GM12878 (cell line): ENCODE measurements at regions of chr20 and their contacts with region 1.

Region 1: GRCh38 chr20:50744143-50744792 is 12.9 kb downstream of the PARD6B start:
- DNase-seq: no peak
- ATAC-seq: no peak
- H3K4me3 ChIP-seq: no peak overlapping the region
- H3K27ac ChIP-seq: no peak overlapping the region
- H3K4me1 ChIP-seq: peaks cover 6% of the 10 kb centered on the region; the same call in 1 of the 2 replicates
- H3K27me3 ChIP-seq: no peaks in the 10 kb centered on the region
- CTCF ChIP-seq: no peak
- EP300 ChIP-seq: no peak
- POLR2A ChIP-seq: no peak
- RAD21 ChIP-seq: no peak

Region 2: GRCh38 chr20:50625986-50626677 is 118.1 kb before region 1 on chr20:
- CTCF ChIA-PET with region 1: interaction called, 18 read pairs
- POLR2A ChIA-PET with region 1: interaction called, 4 read pairs
- RAD21 ChIA-PET with region 1: interaction called, 12 read pairs
- SMC1A ChIA-PET with region 1: interaction called, 9 read pairs
- in situ Hi-C with region 1: no loop called
- intact Hi-C with region 1: loop called (anchors 10 kb)
- DNase-seq: no peak
- ATAC-seq: peak; percentile 73
- H3K4me3 ChIP-seq: no peak overlapping the region
- H3K27ac ChIP-seq: no peak overlapping the region
- H3K4me1 ChIP-seq: no peaks in the 10 kb centered on the region
- H3K27me3 ChIP-seq: no peaks in the 10 kb centered on the region; a peak in 2 of 4 replicates
- CTCF ChIP-seq: peak; percentile 37 to 54 (median 44)
- EP300 ChIP-seq: no peak
- POLR2A ChIP-seq: no peak
- RAD21 ChIP-seq: peak; percentile 51

Region 3: GRCh38 chr20:50663095-50663850 is 81.0 kb before region 1 on chr20:
- CTCF ChIA-PET with region 1: interaction called, 5 read pairs
- POLR2A ChIA-PET with region 1: no interaction called
- RAD21 ChIA-PET with region 1: interaction called, 3 read pairs
- SMC1A ChIA-PET with region 1: interaction called, 3 read pairs
- in situ Hi-C with region 1: no loop called
- intact Hi-C with region 1: loop called (anchors 5 kb)
- DNase-seq: no peak
- ATAC-seq: peak; percentile 40; the same call in 1 of the 3 replicates
- H3K4me3 ChIP-seq: no peak overlapping the region
- H3K27ac ChIP-seq: no peak overlapping the region
- H3K4me1 ChIP-seq: no peaks in the 10 kb centered on the region
- H3K27me3 ChIP-seq: peaks cover 0 to 3% of the 10 kb centered on the region in 2 experiments; a peak in 1 of 4 replicates
- CTCF ChIP-seq: peak in 2 of 3 experiments; percentile 21 to 25; a peak in 2 of 6 replicates
- EP300 ChIP-seq: no peak
- POLR2A ChIP-seq: no peak
- RAD21 ChIP-seq: peak; percentile 40

Region 4: GRCh38 chr20:50675651-50676376 is 68.5 kb before region 1 on chr20:
- CTCF ChIA-PET with region 1: no interaction called
- POLR2A ChIA-PET with region 1: no interaction called
- RAD21 ChIA-PET with region 1: no interaction called
- SMC1A ChIA-PET with region 1: no interaction called
- in situ Hi-C with region 1: no loop called
- intact Hi-C with region 1: no loop called
- DNase-seq: no peak
- ATAC-seq: no peak
- H3K4me3 ChIP-seq: no peak overlapping the region
- H3K27ac ChIP-seq: no peak overlapping the region
- H3K4me1 ChIP-seq: no peaks in the 10 kb centered on the region
- H3K27me3 ChIP-seq: peaks cover 0 to 5% of the 10 kb centered on the region in 2 experiments; a peak in 2 of 4 replicates
- CTCF ChIP-seq: no peak
- EP300 ChIP-seq: no peak
- POLR2A ChIP-seq: no peak
- RAD21 ChIP-seq: no peak